ENCODE measurements at regions of chr1 and their contacts with region 1.

Region 1: DNA sequence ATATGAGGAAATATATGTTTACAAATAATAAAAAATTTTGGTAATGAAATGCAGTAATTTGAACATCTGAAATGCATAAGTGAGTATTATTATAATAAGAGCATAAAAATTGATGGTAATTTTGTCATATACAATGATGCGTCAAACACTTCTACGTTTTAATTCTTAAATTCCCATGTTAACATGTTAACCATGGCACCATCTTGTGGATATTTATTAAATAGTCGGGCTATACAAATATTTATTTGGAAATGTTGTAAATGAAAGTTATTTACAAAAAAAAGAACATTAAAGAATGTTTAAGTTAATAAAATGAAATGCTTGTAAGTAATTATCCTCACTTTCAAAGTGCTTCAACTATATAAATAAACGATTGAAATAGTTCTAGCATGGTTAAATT is 57.2 kb upstream of the C1orf185 start:
- DNase-seq: no peak
- H3K4me3 ChIP-seq: no peak overlapping the region
- H3K27ac ChIP-seq: no peak overlapping the region
- H3K4me1 ChIP-seq: no peaks in the 10 kb centered on the region
- H3K27me3 ChIP-seq: no peaks in the 10 kb centered on the region
- CTCF ChIP-seq: peak in 5 of 6 experiments; percentile 21 to 65 (median 59)
- POLR2A ChIP-seq: no peak

Region 2: GRCh38 chr1:50929376-50929958 is 115.4 kb before region 1 on chr1:
- intact Hi-C with region 1: loop called in 1 of 2 experiments (anchors 5 kb)
- DNase-seq: no peak
- H3K4me3 ChIP-seq: no peak overlapping the region
- H3K27ac ChIP-seq: no peak overlapping the region
- H3K4me1 ChIP-seq: no peaks in the 10 kb centered on the region
- H3K27me3 ChIP-seq: no peaks in the 10 kb centered on the region
- CTCF ChIP-seq: peak; percentile 31 to 71 (median 60)
- POLR2A ChIP-seq: no peak

Region 3: DNA sequence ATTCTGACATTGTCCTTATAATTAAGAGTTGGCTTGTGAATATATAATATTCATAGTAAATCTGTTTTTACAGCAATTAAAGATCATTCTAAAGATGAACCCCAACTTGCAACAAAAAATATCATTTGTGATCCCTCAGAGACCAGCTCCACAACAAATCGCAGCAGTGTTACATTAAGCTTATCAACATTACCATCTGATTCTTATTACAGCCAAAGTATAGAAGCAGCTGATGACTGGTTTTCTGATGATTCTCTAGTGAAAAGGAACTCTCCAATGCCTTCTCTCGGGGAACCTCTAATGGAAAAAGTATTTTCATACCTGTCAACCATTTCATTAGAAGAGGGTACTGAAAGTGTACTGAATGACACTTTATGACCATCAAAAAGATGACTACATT is 102.6 kb after region 1 on chr1:
- intact Hi-C with region 1: no loop called
- DNase-seq: no peak
- H3K4me3 ChIP-seq: no peak overlapping the region
- H3K27ac ChIP-seq: no peak overlapping the region
- H3K4me1 ChIP-seq: no peaks in the 10 kb centered on the region
- H3K27me3 ChIP-seq: no peaks in the 10 kb centered on the region
- CTCF ChIP-seq: no peak
- POLR2A ChIP-seq: no peak

Measured in adrenal gland (tissue), 19 donors.